ENCODE measurements at regions of chr4 and their contacts with region 1.

Region 1: DNA sequence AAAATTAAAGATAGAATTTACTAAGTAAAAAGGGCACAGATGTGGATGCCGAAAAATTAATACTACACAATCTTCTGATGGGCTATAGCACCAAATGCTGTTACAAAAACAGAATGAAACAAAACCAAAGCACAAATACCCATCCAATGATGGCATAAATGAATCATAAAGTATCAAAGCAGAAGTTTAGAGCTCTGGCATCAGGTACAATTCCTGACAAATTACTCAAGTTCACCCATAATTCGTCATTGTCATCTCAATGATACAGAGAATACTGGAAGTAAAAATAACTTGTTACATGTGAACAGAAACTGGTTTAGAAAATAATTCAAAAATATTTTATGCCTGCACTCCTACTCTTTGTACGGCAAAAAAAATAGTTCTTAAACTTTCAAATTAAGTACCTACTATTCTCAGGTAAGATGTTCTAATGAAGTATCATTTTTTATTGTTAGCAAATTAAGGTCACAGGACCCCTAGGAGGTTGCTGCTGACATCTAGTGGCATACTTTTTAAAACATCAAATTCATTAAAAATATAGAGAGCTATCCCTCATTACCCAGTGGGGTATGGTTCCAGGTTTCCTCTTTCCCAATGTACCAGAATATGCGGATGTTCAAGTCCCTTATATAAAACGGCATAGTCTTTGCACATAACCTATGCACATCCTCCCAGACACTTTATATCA is 126.1 kb downstream of the INPP4B start:
- DNase-seq: peak; percentile 57
- H3K4me3 ChIP-seq: no peak overlapping the region
- H3K27ac ChIP-seq: no peak overlapping the region
- H3K4me1 ChIP-seq: peaks cover 16% of the 10 kb centered on the region
- H3K27me3 ChIP-seq: no peaks in the 10 kb centered on the region

Region 2: GRCh38 chr4:142353149-142353738 is 366.8 kb before region 1 on chr4:
- in situ Hi-C with region 1: loop called (anchors 10 kb)
- DNase-seq: peak; percentile 83
- H3K4me3 ChIP-seq: 0 out of 2 replicates have a peak overlapping the region, but pooled peaks have one; percentile 5
- H3K27ac ChIP-seq: peak overlapping the region; percentile 40
- H3K4me1 ChIP-seq: peaks cover 52% of the 10 kb centered on the region
- H3K27me3 ChIP-seq: no peaks in the 10 kb centered on the region

Region 3: DNA sequence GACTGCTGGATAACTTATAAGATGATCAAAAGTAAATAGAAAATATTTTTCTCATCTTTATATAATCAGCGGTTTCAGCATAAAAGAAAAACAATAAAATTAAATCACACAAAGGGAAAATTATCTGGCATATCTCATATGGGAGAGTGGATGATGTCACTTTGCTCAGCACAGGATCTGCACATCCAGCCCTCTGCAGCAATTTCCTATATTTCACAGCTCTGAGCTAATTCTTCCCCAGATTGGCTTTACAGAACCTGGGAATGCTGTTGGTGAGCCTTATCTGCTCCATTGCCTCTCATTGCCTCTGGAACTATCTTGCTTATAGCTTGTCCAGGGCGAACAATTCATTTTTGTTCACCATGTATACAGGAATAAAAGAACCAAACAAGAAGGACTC is 959.4 kb after region 1 on chr4:
- in situ Hi-C with region 1: no loop called
- DNase-seq: no peak
- H3K4me3 ChIP-seq: no peak overlapping the region
- H3K27ac ChIP-seq: no peak overlapping the region
- H3K4me1 ChIP-seq: no peaks in the 10 kb centered on the region
- H3K27me3 ChIP-seq: no peaks in the 10 kb centered on the region